ENCODE measurements at regions of chr16 and their contacts with region 1.

Region 1: GRCh38 chr16:80974649-80975376 is 31.9 kb downstream of the CMC2 start:
- H3K4me3 ChIP-seq: no peak overlapping the region
- H3K27ac ChIP-seq: no peak overlapping the region
- H3K4me1 ChIP-seq: no peaks in the 10 kb centered on the region
- CTCF ChIP-seq: peak; percentile 37

Region 2: DNA sequence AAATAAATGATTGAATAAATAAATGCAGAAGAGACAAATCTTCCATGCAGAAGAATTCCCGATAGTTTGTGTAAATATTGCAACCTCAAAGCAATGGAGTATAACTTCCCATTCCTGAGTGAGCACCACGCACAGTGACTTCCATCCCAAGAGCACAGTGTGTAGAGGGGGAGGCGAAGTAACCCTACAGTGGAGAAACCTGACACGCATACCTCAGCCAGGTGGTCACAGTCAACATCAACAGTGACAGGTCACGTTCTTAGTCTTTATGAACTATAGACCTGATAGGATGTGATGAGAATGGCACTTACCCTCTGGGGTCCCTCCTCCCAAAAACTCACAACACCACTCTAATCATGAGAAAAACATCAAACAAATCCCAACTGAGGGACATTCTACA is 322.4 kb before region 1 on chr16:
- CTCF ChIA-PET with region 1: no interaction called
- POLR2A ChIA-PET with region 1: no interaction called
- H3K4me3 ChIP-seq: no peak overlapping the region
- H3K27ac ChIP-seq: no peak overlapping the region
- H3K4me1 ChIP-seq: no peaks in the 10 kb centered on the region
- CTCF ChIP-seq: no peak

Region 3: DNA sequence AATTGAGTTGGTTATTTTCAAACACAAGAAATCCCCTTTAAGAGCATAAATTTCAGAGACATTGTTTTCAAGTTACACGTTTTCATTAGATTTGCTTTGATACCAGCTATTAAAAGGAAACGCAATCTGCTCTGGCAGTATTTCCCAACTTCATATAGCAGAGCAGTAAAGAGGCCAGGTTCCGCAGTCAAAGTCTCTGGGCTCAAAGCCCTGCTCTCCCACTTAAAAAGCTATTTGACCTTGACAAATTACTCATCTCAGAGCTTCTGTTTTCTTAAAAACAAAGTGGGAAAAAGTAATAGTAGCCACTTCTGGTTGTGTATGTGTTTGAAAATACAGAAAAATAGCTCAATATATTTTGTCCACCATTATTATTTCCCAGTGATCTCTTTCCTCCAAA is 80.7 kb before region 1 on chr16:
- CTCF ChIA-PET with region 1: no interaction called
- POLR2A ChIA-PET with region 1: no interaction called
- H3K4me3 ChIP-seq: no peak overlapping the region
- H3K27ac ChIP-seq: no peak overlapping the region
- H3K4me1 ChIP-seq: peaks cover 7% of the 10 kb centered on the region; the same call in 1 of the 2 replicates
- CTCF ChIP-seq: no peak

Region 4: GRCh38 chr16:80946481-80946880 is 28.3 kb before region 1 on chr16:
- CTCF ChIA-PET with region 1: no interaction called
- POLR2A ChIA-PET with region 1: no interaction called
- H3K4me3 ChIP-seq: no peak overlapping the region
- H3K27ac ChIP-seq: no peak overlapping the region
- H3K4me1 ChIP-seq: no peaks in the 10 kb centered on the region
- CTCF ChIP-seq: no peak

Region 5: DNA sequence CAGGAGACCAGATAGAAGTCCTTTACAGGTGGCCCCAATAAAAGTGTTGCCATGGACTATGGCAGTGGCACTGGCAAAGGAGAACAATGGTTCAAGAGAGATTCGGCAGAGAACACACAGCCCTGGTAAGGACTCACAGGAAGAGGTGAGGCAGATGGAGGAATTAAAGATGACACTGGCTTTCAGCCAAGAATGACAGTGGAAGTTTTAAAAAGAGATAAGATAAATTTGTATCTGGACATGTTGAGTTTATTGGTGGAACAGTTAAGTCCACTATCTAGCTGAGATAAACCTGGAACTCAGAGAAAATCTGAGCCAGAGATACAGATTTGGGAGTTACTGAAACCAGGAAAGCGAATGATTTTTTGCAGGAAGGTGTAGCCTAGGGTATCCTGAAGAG is 11.7 kb after region 1 on chr16:
- CTCF ChIA-PET with region 1: interaction called, 14 read pairs
- POLR2A ChIA-PET with region 1: no interaction called
- H3K4me3 ChIP-seq: no peak overlapping the region
- H3K27ac ChIP-seq: no peak overlapping the region
- H3K4me1 ChIP-seq: peaks cover 23% of the 10 kb centered on the region
- CTCF ChIP-seq: no peak

Region 6: DNA sequence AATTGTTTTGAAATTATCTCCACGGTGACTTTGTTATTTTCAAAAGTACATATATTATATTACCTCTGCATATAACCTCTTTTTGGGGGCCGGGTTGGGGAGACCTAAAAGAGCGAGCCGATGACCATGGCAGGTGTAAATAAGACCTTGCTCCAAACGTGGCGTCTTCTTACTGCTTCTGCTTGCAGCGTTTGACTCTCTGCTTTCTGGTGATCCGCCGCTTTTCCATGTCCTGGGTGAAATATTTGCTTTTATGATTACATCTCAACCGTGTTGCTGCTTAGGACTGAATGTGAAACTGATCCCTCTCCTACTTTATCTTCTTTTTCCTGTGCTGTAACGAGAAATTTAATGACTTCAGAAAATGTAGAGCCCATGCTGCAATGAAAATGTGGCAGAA is 78.9 kb after region 1 on chr16:
- CTCF ChIA-PET with region 1: no interaction called
- POLR2A ChIA-PET with region 1: no interaction called
- H3K4me3 ChIP-seq: no peak overlapping the region
- H3K27ac ChIP-seq: no peak overlapping the region
- H3K4me1 ChIP-seq: no peaks in the 10 kb centered on the region
- CTCF ChIP-seq: no peak